ENCODE measurements at regions of chr6 and their contacts with region 1.

Region 1: GRCh38 chr6:49646130-49646824 is 9.6 kb upstream of the RHAG start:
- DNase-seq: no peak
- ATAC-seq: no peak
- H3K4me3 ChIP-seq: no peak overlapping the region
- H3K27ac ChIP-seq: no peak overlapping the region
- H3K4me1 ChIP-seq: no peaks in the 10 kb centered on the region
- H3K27me3 ChIP-seq: no peaks in the 10 kb centered on the region
- CTCF ChIP-seq: no peak
- EP300 ChIP-seq: no peak
- POLR2A ChIP-seq: no peak
- RAD21 ChIP-seq: no peak

Region 2: DNA sequence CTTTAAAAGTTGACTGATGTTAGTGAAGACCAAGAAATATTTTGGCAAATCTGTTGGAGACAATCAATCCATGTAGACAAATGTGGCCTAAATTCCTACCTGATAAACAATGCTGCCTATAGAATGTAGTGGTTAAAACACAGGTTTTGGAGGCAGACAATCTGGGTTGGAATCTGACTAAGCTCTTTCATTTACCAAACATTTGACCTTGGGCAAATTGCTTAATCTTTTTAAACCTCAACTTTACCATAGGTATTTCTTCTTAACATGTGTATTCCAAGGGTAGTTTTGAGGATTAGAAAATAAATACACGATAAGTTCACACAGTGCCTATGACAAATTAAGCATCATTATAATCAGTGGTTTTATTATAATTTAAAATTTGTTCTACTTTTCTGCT is 21.1 kb before region 1 on chr6:
- CTCF ChIA-PET with region 1: no interaction called
- POLR2A ChIA-PET with region 1: no interaction called
- in situ Hi-C with region 1: no loop called
- intact Hi-C with region 1: no loop called
- DNase-seq: no peak
- ATAC-seq: no peak
- H3K4me3 ChIP-seq: no peak overlapping the region
- H3K27ac ChIP-seq: no peak overlapping the region
- H3K4me1 ChIP-seq: no peaks in the 10 kb centered on the region
- H3K27me3 ChIP-seq: no peaks in the 10 kb centered on the region; a peak in 1 of 5 replicates
- CTCF ChIP-seq: no peak
- EP300 ChIP-seq: no peak
- POLR2A ChIP-seq: no peak
- RAD21 ChIP-seq: no peak

Region 3: GRCh38 chr6:49676696-49677281 is 30.5 kb after region 1 on chr6:
- CTCF ChIA-PET with region 1: no interaction called
- POLR2A ChIA-PET with region 1: no interaction called
- in situ Hi-C with region 1: no loop called
- intact Hi-C with region 1: loop called (anchors 1 kb)
- DNase-seq: no peak
- ATAC-seq: no peak
- H3K4me3 ChIP-seq: no peak overlapping the region
- H3K27ac ChIP-seq: no peak overlapping the region
- H3K4me1 ChIP-seq: no peaks in the 10 kb centered on the region
- H3K27me3 ChIP-seq: no peaks in the 10 kb centered on the region
- CTCF ChIP-seq: no peak
- EP300 ChIP-seq: no peak
- POLR2A ChIP-seq: no peak
- RAD21 ChIP-seq: no peak

Measured in HepG2 (cell line).